Heart right ventricle (tissue), 16 donors: ENCODE measurements at regions of chr14 and their contacts with region 1.

Region 1: DNA sequence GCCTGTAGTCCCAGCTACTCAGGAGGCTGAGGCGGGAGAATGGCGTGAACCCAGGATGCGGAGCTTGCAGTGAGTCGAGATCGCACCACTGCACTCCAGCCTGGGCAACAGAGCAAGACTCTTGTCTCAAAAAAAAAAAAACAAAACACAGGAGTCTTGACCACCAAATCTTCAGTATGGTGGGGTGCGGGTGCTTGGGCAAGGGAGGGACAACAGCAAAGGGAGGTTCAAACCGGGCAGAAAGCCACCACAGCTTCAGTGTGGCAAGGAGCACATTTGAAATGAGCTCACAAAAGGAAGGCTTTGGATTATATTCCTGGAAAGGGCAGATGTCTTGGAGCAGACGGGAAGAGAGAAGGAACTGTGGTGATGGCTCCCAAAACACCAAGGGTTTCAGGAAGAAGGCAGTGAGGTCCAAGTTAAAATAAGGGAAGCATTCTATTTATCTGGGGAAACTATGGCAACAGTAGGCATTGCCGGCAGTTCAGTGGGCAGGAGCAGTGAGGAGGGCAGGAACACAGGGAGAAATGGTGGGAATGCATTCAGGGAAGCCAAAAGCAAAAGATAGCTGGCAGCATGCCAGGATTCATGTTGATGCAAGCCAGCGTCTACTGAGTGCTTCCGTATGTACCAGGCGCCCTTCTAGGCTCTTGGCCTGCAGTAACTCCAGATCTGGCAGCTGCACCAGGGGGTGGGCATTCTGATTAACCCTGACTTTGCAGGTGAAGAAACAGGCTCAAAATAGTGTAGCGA is 51.0 kb upstream of the SRSF5 start:
- DNase-seq: peak; percentile 44 to 79
- ATAC-seq: peak; percentile 17 to 73 (median 55)
- H3K4me3 ChIP-seq: no peak overlapping the region
- H3K27ac ChIP-seq: peak overlapping the region in 8 of 10 donors; percentile 15 to 88 (median 36)
- H3K4me1 ChIP-seq: peaks cover 34 to 98% (median 79%) of the 10 kb centered on the region in 9 donors
- H3K27me3 ChIP-seq: no peaks in the 10 kb centered on the region
- CTCF ChIP-seq: no peak

Region 2: DNA sequence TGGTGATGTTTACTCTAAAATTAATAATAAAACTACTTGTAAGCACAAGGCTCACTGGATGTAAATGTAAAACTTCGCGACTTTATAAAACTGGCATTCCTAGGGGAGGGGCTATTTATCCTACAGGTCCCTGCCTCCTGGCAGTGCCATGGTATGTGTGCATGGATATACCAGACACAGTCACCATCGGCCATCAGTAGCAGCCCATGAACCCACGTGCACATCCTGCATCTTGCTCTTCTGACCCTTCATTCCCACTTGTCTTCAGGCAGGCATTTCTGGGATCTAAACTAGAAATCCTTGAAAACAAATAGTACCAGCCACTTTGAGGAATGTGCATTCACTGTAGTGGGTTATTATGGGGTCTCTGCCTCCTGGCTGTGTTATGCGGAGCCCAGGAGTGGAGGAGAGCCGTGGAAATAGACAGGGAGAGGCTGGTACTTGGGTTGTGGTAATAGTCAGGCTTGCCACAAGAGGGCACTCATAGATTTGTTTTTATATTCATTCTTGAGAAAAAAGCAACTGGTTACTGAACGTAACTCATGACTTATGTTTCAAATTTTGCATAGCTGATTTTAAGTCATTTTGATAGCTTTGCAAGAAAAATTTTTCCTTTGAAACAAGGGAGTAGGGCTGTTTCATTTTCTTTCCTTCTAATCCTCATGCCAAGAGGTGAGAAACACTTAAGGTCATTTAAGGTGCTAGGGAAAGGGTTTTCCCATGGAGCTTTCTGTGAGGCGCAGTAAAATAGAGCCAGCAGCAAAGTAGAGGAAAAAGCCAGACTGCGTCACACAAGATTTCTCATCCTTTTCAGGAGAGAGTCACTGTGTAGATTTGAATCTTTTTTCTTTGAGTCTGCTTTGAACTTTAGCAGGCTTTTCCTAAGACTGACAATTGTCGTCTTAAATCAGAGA is 473.3 kb before region 1 on chr14:
- intact Hi-C with region 1: no loop called
- DNase-seq: peak in 1 of 2 donors; percentile 72
- ATAC-seq: peak; percentile 48 to 77 (median 64)
- H3K4me3 ChIP-seq: no peak overlapping the region
- H3K27ac ChIP-seq: peak overlapping the region in 3 of 10 donors; percentile 9 to 45 (median 17)
- H3K4me1 ChIP-seq: peaks cover 0 to 31% (median 14%) of the 10 kb centered on the region in 9 donors
- H3K27me3 ChIP-seq: no peaks in the 10 kb centered on the region
- CTCF ChIP-seq: peak; percentile 62 to 86 (median 76)

Region 3: GRCh38 chr14:69648477-69649451 is 67.1 kb before region 1 on chr14:
- intact Hi-C with region 1: loop called in 1 of 10 experiments (anchors 5 kb)
- DNase-seq: no peak
- ATAC-seq: peak in 7 of 8 donors; percentile 33 to 60 (median 51)
- H3K4me3 ChIP-seq: peak overlapping the region in 5 of 10 donors; percentile 0 to 26 (median 10)
- H3K27ac ChIP-seq: peak overlapping the region; percentile 37 to 91 (median 78)
- H3K4me1 ChIP-seq: peaks cover 36 to 100% (median 84%) of the 10 kb centered on the region in 9 donors
- H3K27me3 ChIP-seq: no peaks in the 10 kb centered on the region
- CTCF ChIP-seq: no peak

Region 4: DNA sequence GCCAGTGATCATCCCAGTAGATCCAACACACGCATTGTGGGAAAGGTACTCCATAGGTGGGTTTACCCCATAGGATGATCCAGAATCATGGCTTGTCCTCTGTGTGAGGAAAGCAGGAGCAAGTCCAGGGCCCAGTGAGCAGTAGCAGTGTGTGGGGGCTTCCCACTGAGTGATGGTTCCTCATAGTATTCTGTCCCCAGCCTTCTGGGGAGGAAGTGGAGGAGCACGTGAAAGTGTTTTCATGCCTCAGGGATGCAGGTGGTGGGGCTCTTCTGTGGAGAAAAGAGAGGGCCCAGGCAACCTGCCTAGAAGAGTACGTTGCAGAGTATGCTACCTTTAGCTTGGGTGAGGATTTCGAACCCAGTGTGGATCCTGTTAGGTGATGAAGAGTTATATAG is 48.0 kb before region 1 on chr14:
- intact Hi-C with region 1: loop called in 3 of 10 experiments (anchors 5 to 10 kb)
- DNase-seq: no peak
- ATAC-seq: no peak
- H3K4me3 ChIP-seq: no peak overlapping the region
- H3K27ac ChIP-seq: peak overlapping the region in 3 of 10 donors; percentile 16 to 76 (median 75)
- H3K4me1 ChIP-seq: peaks cover 34 to 100% (median 88%) of the 10 kb centered on the region in 9 donors
- H3K27me3 ChIP-seq: no peaks in the 10 kb centered on the region
- CTCF ChIP-seq: no peak

Region 5: DNA sequence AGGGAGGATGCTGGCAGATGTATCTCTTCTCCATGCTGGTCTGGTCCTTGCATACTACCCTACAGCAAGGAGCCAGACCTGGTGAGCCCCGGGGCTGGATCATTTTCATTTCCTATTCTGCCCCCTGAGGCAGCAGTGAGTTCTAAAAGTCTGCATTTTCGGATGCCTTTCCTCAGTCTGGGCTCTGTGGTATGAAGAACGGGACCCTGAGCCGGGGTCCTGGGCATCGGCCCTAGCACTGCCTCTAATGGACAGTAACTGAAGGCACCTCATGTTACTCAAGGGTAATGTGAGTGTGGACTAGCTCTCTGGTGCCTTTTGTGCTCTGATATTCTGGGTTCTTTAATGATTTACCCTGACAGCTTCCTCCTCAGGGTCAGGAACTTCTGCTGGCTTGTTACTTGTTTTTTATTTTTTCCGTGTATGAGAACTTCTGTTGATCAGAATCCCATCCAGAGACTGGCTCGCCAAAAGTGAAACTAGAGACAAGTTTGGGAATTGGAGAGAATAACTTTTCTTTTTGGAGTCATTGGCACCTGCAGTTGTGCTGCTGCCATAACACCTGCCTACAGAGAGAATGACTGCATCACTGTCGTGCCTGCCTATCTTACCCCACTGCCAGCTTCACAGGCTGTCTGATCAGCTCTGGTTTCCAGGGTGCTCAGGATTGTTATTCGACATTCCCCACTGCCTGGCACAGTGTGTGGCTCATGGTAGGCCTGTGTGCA is 42.2 kb before region 1 on chr14:
- intact Hi-C with region 1: loop called in 6 of 10 experiments (anchors 5 to 10 kb)
- DNase-seq: no peak
- ATAC-seq: peak in 7 of 8 donors; percentile 19 to 51 (median 27)
- H3K4me3 ChIP-seq: peak overlapping the region in 3 of 10 donors; percentile 9 to 35 (median 24)
- H3K27ac ChIP-seq: peak overlapping the region; percentile 24 to 78 (median 70)
- H3K4me1 ChIP-seq: peaks cover 43 to 98% (median 79%) of the 10 kb centered on the region in 9 donors
- H3K27me3 ChIP-seq: no peaks in the 10 kb centered on the region
- CTCF ChIP-seq: peak in 1 of 9 donors; percentile 9

Region 6: DNA sequence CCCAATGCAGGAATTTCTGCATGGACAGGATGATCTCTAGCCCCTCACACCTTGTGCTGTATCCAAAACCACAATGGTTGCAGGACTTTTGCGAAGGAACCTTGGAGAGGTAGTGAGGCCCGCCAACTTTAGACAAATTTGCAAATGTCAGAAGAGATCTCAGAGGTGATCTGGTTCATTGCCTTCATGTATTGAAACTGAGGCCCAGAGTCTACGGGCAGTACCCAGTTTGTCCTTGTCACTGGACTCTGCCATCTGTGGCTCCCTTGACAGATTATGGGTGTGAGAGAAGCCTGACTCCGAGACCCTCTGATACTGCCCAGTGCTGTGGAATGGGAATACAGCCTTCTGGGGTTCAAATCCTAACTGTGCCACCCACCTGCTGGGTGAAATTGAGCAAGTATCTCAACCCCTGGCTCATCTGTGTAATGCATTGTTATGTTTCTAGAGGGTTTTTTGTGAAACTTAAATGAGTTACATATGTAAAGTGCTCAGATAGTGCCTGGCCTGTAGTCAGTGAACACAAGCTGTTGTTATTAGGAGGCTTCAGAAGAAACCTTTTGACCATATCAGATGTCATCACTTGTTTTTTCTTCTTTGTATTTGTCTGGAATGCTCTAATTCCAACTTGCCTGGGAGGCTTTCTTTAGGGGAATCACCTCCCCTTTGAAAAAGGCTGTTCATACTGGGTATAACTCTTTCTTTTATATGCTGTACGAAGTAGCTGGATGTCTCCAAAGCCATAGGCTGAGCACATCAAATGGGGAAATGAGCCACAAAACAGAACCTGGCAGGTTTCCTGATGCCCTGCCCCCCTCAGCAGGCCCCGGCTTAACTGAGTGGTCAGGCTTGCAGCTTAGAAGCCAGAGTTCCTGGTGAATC is 20.3 kb before region 1 on chr14:
- intact Hi-C with region 1: no loop called
- DNase-seq: no peak
- ATAC-seq: peak in 5 of 8 donors; percentile 15 to 35 (median 22)
- H3K4me3 ChIP-seq: no peak overlapping the region
- H3K27ac ChIP-seq: peak overlapping the region in 9 of 10 donors; percentile 65 to 92 (median 83)
- H3K4me1 ChIP-seq: peaks cover 32 to 98% (median 84%) of the 10 kb centered on the region in 9 donors
- H3K27me3 ChIP-seq: no peaks in the 10 kb centered on the region
- CTCF ChIP-seq: no peak